Activated CD4-positive, alpha-beta memory T cell treated with anti-CD3 and anti-CD28 coated beads for 36 hours (primary cell): ENCODE measurements at regions of chr1 and their contacts with region 1.

Region 1: GRCh38 chr1:109984456-109985275 is at the start of gene AHCYL1:
- DNase-seq: peak; percentile 100
- H3K4me3 Mint-ChIP-seq: peak within 1 kb of the TSS; percentile 99
- H3K27ac Mint-ChIP-seq: peak within 1 kb of the TSS; percentile 92
- H3K4me1 Mint-ChIP-seq: peaks cover 39% of the 10 kb centered on the region
- H3K27me3 Mint-ChIP-seq: no peaks in the 10 kb centered on the region
- total RNA-seq, gene AHCYL1: 89.6 to 92.3 TPM

Region 2: DNA sequence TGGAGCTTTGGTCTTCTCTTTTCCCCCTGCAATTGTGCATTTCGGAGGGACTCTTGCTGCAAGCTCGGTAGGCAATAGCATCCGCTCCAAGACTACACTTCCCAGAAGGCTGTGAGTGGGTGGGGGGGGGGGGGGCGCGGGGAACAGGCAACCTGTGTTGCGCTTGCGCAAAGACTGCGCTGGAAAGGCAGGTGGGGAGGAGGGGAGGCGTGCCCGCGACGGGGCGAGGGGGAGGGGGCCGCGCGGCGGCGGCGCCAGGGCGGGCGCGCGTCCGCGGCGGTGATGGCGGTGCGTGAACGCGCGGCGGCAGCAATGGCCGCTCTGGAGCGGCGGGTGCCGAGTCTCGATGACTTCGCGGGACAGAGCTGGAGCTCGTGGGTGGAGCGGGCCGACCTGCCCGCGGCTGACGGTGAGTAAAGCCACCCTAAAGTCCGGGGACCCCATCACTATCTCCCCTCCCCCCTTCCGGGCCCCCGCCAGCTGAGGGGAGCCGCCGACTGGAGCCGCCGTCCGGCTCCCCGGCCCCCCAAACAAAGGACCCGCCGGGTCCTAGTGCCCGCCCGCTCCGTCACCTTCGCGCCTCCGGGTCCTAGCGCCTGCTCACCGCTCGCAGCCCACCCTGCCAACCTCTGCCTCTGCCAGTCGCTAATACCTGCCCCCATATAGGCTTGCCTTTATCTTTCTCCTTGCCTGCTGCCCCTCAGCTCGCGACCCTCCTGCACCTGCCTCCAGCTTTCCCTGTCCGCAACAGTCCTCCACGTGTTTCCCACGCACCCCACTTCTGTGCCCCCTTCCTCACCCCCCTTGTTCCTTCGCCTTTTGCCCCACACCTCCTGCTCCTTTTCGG is 500.8 kb before region 1 on chr1 and contains the start of gene ATXN7L2:
- CTCF ChIA-PET with region 1: no interaction called
- POLR2A ChIA-PET with region 1: no interaction called
- intact Hi-C with region 1: loop called (anchors 2 kb)
- DNase-seq: peak; percentile 95
- H3K4me3 Mint-ChIP-seq: peak within 1 kb of the TSS; percentile 90
- H3K27ac Mint-ChIP-seq: peak within 1 kb of the TSS; percentile 88
- H3K4me1 Mint-ChIP-seq: peaks cover 28% of the 10 kb centered on the region
- H3K27me3 Mint-ChIP-seq: no peaks in the 10 kb centered on the region
- total RNA-seq, gene ATXN7L2: 10.7 to 11.1 TPM

Region 3: GRCh38 chr1:109655601-109656519 is 328.8 kb before region 1 on chr1 and contains the start of gene GSTM4:
- CTCF ChIA-PET with region 1: interaction called, 26 read pairs
- POLR2A ChIA-PET with region 1: interaction called, 4 read pairs
- intact Hi-C with region 1: no loop called
- DNase-seq: peak; percentile 80
- H3K4me3 Mint-ChIP-seq: peak within 1 kb of the TSS; percentile 89
- H3K27ac Mint-ChIP-seq: peak within 1 kb of the TSS; percentile 66
- H3K4me1 Mint-ChIP-seq: peaks cover 12% of the 10 kb centered on the region
- H3K27me3 Mint-ChIP-seq: peaks cover 10% of the 10 kb centered on the region
- total RNA-seq, gene GSTM4: 8.2 to 12.0 TPM

Region 4: DNA sequence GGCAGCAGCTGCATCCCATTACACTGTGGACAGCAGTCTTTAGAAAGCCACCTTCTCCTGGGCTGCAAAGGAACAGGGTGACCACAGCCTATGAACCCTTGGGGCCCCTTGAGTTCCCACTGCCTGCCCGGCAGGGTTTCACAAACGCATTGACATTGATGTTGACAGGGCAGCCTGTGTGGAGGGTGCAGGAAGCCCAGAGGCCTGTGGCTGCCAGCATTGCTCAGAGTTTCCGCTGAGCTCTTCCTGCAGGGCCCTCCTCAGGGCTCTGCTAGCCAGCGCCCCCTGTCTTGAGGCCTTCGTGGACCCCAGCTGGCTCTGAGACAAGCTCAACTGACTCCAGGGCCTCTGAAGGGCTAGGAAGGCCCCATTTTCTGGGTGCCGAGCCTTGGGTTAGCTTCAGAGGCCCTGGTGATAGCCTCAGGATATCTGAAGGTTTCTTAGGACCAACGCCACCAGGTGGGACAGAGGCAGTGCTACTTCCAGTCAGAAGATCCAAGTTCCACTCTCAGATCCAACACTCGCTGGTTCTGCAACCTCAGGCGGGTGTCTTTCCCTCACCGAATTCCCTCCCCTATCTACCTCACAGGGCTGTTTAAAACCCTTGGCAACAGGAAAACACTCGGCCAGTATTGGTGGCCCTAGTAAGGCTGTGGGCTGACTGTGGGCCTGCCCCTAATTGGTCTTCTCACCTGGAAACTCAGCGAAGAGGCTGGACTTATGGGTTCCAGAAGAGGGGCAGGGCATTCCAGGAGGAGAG is 193.8 kb before region 1 on chr1:
- CTCF ChIA-PET with region 1: interaction called, 723 read pairs
- POLR2A ChIA-PET with region 1: interaction called, 4 read pairs
- intact Hi-C with region 1: loop called (anchors 2 kb)
- DNase-seq: peak; percentile 93
- H3K4me3 Mint-ChIP-seq: no peak overlapping the region
- H3K27ac Mint-ChIP-seq: peak overlapping the region; percentile 87
- H3K4me1 Mint-ChIP-seq: peaks cover 66% of the 10 kb centered on the region
- H3K27me3 Mint-ChIP-seq: no peaks in the 10 kb centered on the region

Region 5: GRCh38 chr1:109910123-109910962 is 74.3 kb before region 1 on chr1 and contains the start of gene CSF1:
- CTCF ChIA-PET with region 1: interaction called, 10 read pairs
- POLR2A ChIA-PET with region 1: interaction called, 3 read pairs
- intact Hi-C with region 1: loop called (anchors 2 kb)
- DNase-seq: peak; percentile 80
- H3K4me3 Mint-ChIP-seq: peak within 1 kb of the TSS; percentile 88
- H3K27ac Mint-ChIP-seq: peak within 1 kb of the TSS; percentile 89
- H3K4me1 Mint-ChIP-seq: peaks cover 72% of the 10 kb centered on the region
- H3K27me3 Mint-ChIP-seq: no peaks in the 10 kb centered on the region
- total RNA-seq, gene CSF1: 135 to 140 TPM

Region 6: DNA sequence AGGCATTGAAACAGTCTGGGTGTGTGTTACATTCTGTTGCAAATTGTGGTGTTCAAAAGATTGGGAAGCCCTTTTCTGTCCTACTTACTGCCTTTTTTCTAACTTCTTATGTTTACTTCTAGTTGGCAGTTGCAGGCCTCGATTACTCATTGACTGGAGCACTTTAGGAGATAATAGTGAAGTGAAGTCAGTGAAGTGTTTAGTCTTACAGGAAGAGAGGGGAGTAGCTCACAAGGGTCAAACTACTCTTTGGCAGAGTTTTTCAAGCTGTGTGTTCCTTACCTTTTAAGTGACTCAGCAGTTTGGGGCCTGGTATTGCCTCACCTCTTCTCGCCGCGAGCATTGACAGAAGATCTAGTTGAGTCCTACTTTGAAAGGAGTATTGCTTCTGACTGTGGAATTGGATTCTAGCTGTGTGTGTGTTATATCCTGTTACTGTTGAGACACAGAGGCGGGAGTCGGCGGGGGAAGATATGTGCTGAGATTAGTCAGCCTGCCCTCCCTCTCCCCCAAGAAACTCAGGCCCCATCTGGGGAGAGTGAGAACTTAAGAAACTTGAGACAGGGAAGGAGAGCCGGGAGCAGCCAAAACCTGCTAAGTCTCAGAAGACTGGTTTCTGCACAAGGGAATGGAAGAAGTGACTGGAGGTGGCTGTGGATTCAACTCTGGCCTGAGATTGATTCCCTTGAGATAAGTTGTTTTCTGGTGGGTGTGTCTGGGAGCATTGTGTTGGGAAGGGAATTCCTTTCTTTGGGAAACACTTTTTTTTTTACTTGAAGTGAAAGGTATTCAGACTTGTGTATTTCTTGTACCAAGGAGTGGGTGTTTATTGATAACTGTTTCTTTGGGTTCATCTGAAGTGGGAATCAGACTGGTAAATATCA is 19.3 kb after region 1 on chr1:
- CTCF ChIA-PET with region 1: interaction called, 69 read pairs
- POLR2A ChIA-PET with region 1: interaction called, 4 read pairs
- intact Hi-C with region 1: loop called (anchors 2 kb)
- DNase-seq: peak; percentile 81
- H3K4me3 Mint-ChIP-seq: peak overlapping the region; percentile 30
- H3K27ac Mint-ChIP-seq: peak overlapping the region; percentile 82
- H3K4me1 Mint-ChIP-seq: peaks cover 24% of the 10 kb centered on the region
- H3K27me3 Mint-ChIP-seq: no peaks in the 10 kb centered on the region

Region 7: DNA sequence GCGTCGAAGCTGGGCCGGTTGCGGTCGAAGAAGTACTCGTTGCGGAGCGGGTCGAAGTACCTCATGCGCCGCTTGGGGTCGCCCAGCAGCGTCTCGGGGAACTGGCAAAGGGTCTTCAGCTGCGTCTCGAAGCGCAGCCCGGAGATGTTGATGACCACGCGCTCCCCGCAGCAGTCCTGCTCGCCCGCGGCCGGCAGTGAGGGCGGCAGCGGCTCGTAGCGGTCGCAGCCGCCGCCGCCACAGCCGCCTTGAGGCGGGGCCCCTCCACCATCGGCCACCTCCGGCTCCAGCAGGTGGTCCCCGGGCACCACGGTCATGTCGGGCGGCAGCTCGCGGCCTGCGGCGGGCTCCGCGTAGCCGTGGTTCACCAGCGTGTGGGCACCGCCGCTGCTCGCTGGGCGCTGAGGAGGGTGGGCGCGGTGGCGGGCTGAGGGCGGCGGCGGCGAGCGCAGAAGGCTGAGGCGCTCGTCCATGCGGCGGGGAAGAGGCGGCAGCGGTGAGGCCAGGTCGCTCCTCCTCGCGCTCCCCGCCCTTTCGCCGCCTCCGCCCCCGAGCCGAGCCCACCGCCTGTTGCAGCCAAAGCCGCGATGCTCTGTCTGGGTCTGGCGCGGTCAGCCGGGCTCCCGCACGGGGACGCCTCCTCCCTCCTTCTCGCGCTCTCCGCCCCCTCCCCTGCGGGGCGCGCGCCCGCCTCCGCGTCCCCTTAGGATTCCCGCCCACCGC is 689.8 kb after region 1 on chr1 and contains the start of gene KCNA3:
- CTCF ChIA-PET with region 1: no interaction called
- POLR2A ChIA-PET with region 1: no interaction called
- intact Hi-C with region 1: no loop called
- DNase-seq: peak; percentile 72
- H3K4me3 Mint-ChIP-seq: peak within 1 kb of the TSS; percentile 95
- H3K27ac Mint-ChIP-seq: peak within 1 kb of the TSS; percentile 97
- H3K4me1 Mint-ChIP-seq: peaks cover 29% of the 10 kb centered on the region
- H3K27me3 Mint-ChIP-seq: no peaks in the 10 kb centered on the region
- total RNA-seq, gene KCNA3: 25.2 to 25.6 TPM